H1 (cell line): ENCODE measurements at regions of chr1 and their contacts with region 1.

Region 1: DNA sequence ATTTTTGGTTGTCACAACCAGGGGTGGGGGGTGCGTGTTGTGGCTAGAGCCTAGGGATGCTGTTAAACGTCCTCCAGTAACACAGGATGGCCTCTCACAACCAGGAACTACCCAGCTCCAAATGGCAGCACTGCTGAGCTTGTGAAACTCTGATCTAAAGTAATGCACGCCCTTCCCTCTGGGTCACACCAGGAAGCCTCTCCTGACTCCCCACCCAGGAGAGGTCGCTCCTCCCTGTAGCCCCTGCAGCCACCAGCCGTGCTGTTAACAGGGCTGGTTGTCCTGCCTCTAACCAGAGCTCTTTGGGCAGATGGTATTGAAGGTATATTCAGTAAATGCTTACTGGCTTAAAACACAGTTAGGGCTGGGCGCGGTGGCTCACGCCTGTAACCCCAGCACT is 73.2 kb downstream of the NKAIN1 start:
- DNase-seq: no peak
- H3K4me3 ChIP-seq: no peak overlapping the region
- H3K27ac ChIP-seq: no peak overlapping the region
- H3K4me1 ChIP-seq: peaks cover 0 to 7% (median 0%) of the 10 kb centered on the region in 4 experiments; a peak in 2 of 7 replicates
- H3K27me3 ChIP-seq: no peaks in the 10 kb centered on the region
- CTCF ChIP-seq: no peak
- EP300 ChIP-seq: no peak
- POLR2A ChIP-seq: no peak
- RAD21 ChIP-seq: no peak

Region 2: DNA sequence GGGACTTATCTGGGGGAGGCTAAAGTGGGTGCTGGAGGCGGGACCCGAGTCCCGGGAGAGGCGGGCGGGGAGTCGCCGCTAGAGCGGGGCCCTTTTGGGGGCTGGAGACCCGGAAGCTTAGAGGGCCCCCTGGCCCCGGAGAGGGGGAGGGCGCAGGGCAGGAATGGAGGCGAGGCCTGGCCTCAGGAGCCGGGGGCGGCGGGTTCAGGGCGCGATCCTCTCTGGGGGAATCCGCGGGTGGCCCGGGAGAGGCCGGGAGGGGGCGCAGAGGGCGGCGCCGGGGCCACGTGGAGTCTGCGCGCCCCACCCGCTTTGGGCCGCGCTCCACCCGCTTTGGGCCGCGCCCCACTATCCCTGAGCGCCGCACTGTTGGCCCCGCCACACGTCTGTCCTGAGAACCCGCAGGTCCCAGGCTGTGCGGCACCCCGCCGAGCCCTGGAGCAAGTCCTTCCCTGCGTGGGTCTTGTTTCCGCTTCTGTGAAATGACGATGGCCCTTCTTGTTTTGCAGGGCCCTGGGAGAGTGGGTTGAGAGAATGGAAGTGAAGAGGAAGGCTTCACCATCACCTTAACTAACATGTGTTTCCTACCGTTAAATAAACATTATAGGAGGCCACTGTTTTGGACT is 11.1 kb before region 1 on chr1:
- CTCF ChIA-PET with region 1: interaction called, 10 read pairs
- POLR2A ChIA-PET with region 1: interaction called, 8 read pairs
- DNase-seq: peak; percentile 31 to 90
- H3K4me3 ChIP-seq: peak overlapping the region; percentile 49 to 66 (median 57)
- H3K27ac ChIP-seq: peak overlapping the region; percentile 60; the same call in 1 of the 2 replicates
- H3K4me1 ChIP-seq: peaks cover 0 to 3% (median 1%) of the 10 kb centered on the region in 4 experiments; a peak in 4 of 7 replicates
- H3K27me3 ChIP-seq: no peaks in the 10 kb centered on the region
- CTCF ChIP-seq: peak in 1 of 3 experiments; percentile 6; a peak in 1 of 4 replicates
- EP300 ChIP-seq: no peak
- POLR2A ChIP-seq: peak in 1 of 2 experiments; percentile 66; a peak in 2 of 3 replicates
- RAD21 ChIP-seq: 0 out of 4 replicates have a peak, but pooled peaks of 1 of the 2 experiments have one; percentile 8

Region 3: DNA sequence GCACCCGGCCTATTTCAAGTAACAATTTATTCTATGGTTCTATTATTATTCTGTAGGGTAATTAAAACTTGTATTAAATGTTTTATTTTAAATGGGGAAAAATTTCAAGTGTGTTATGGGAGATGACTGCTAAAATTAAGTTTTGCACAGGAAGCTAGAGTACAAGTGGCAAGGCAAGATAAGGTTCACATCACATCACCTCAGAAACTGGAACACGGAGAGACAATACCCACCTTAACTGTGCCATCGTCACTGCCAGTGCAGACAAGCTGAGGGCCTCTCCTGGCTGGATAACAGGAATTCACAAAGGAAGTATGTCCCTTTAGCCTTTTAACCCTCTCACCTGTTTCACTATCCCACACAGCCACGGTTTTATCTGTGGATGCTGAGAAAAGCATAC is 122.6 kb after region 1 on chr1:
- CTCF ChIA-PET with region 1: no interaction called
- POLR2A ChIA-PET with region 1: no interaction called
- DNase-seq: no peak
- H3K4me3 ChIP-seq: no peak overlapping the region
- H3K27ac ChIP-seq: no peak overlapping the region
- H3K4me1 ChIP-seq: no peaks in the 10 kb centered on the region
- H3K27me3 ChIP-seq: no peaks in the 10 kb centered on the region
- CTCF ChIP-seq: no peak
- EP300 ChIP-seq: no peak
- POLR2A ChIP-seq: no peak
- RAD21 ChIP-seq: no peak

Region 4: DNA sequence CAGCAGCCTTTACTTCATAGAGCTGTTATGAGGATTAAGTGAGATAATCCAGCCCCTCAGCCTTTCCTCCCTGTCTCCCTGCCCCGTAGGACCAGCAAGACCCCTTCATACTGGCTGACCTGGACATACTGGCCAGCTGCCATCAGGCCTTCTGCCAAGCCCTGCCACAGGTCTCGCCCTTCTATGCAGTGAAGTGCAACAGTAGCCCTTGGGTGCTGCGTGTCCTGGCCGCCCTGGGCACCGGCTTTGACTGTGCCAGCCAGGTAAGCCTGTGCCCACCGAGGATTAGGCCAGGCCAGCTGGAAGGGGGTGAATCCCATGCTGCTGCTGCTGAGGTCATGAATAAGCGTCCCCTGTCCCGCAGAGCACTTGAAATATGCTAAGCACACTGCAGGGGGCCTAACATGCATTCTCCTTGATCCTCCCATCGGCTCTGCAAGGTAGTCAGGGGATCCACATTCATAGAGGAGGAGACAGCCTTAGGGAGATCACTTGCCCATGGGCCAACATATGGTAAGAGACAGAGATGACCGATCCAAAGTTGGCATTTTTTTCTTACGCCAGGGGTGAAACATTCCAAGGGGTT is 336.6 kb after region 1 on chr1:
- CTCF ChIA-PET with region 1: no interaction called
- POLR2A ChIA-PET with region 1: no interaction called
- DNase-seq: peak; percentile 27 to 66
- H3K4me3 ChIP-seq: peak overlapping the region in 1 of 4 experiments; percentile 9; a peak in 1 of 8 replicates
- H3K27ac ChIP-seq: no peak overlapping the region
- H3K4me1 ChIP-seq: peaks cover 4 to 16% (median 13%) of the 10 kb centered on the region in 4 experiments
- H3K27me3 ChIP-seq: no peaks in the 10 kb centered on the region
- CTCF ChIP-seq: no peak
- EP300 ChIP-seq: no peak
- POLR2A ChIP-seq: no peak
- RAD21 ChIP-seq: no peak